ENCODE measurements at regions of chr19 and their contacts with region 1.

Region 1: GRCh38 chr19:12965017-12965811 is 4.2 kb upstream of the DAND5 start:
- DNase-seq: peak; percentile 85
- H3K4me3 Mint-ChIP-seq: peak overlapping the region; percentile 90
- H3K27ac Mint-ChIP-seq: peak overlapping the region; percentile 79
- H3K4me1 Mint-ChIP-seq: peaks cover 8% of the 10 kb centered on the region
- H3K27me3 Mint-ChIP-seq: peaks cover 5% of the 10 kb centered on the region

Region 2: DNA sequence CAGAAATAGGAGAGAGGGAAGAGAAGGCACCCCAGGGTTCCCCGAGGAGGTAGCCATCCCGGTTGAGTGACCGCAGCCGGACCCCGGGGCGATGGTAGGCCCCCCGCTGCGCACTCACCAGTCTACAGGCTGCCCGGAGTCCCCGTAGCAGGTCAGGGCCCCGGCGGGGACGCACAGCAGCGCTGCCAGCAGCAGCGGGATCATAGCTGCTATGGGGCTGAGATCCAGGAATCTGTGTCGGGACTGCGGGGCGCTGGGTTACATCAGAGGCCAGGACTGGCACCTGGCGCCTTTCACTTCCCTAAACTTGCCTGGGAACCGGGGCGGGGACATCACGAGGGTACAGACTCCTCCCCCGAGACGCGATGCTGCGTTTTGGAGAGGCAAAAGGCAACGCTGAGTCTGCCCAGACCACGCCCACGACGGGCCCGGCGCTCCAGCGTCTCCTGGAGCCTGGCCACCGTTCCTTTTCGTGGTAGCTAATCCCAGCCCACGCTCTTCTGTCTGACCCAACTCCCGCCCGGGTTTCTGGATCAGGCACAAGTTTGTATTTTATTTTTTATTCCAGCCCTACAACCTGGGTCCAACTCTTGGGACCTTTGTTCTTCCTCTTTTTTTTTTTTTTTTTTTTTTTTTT is 83.9 kb before region 1 on chr19 and contains the start of gene DNASE2:
- CTCF ChIA-PET with region 1: interaction called, 56 read pairs
- POLR2A ChIA-PET with region 1: interaction called, 10 read pairs
- DNase-seq: peak; percentile 94
- H3K4me3 Mint-ChIP-seq: peak within 1 kb of the TSS; percentile 83
- H3K27ac Mint-ChIP-seq: peak within 1 kb of the TSS; percentile 83
- H3K4me1 Mint-ChIP-seq: peaks cover 40% of the 10 kb centered on the region
- H3K27me3 Mint-ChIP-seq: no peaks in the 10 kb centered on the region
- total RNA-seq, gene DNASE2: 37.6 to 39.3 TPM

Region 3: GRCh38 chr19:12938234-12939025 is 26.8 kb before region 1 on chr19 and contains the start of gene CALR:
- CTCF ChIA-PET with region 1: interaction called, 19 read pairs
- POLR2A ChIA-PET with region 1: interaction called, 13 read pairs
- DNase-seq: peak; percentile 99
- H3K4me3 Mint-ChIP-seq: peak within 1 kb of the TSS; percentile 99
- H3K27ac Mint-ChIP-seq: peak within 1 kb of the TSS; percentile 92
- H3K4me1 Mint-ChIP-seq: peaks cover 61% of the 10 kb centered on the region
- H3K27me3 Mint-ChIP-seq: no peaks in the 10 kb centered on the region
- total RNA-seq, gene CALR: 640 to 660 TPM

Region 4: DNA sequence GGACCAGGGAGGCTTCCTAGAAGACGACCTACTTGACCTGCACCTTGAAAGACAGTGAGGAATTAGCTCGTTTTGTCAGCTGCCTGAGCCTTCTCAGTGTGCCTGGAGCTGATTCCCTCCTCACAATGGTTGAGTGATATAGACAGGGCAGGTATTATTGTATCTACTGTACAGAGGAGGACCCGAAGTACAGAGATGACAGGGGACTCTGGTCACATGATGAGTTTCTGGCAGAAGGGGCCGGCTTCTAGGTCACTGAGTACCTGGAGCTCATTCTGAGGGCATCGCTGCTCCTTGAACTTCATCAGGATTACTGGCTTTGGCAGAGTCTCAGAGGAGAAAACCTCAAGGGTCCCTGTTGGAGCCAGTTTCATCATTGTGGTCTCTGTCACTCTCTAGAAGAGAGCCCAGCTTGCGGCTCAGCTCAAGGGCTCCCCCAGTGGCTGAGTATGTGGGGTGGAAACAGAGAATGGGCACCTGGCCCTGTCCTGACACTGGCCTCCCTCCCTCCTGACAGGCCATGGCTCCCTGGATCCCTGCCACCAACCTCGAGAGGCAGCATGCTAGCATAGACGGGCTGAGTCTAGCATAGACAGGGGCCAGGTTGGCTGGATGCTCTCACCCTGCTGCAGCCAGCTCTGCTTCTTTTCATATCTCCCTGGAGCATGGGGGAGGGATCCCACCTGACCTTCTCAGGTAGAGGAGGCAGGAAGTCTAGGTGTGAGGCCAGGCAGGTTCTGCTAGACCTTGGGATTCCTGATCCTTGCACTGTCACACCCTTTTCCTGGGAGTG is 68.8 kb after region 1 on chr19:
- CTCF ChIA-PET with region 1: interaction called, 12 read pairs
- POLR2A ChIA-PET with region 1: no interaction called
- DNase-seq: peak; percentile 42
- H3K4me3 Mint-ChIP-seq: no peak overlapping the region
- H3K27ac Mint-ChIP-seq: no peak overlapping the region
- H3K4me1 Mint-ChIP-seq: peaks cover 2% of the 10 kb centered on the region
- H3K27me3 Mint-ChIP-seq: peaks cover 4% of the 10 kb centered on the region

Region 5: GRCh38 chr19:13093407-13094105 is 128.3 kb after region 1 on chr19:
- CTCF ChIA-PET with region 1: interaction called, 37 read pairs
- POLR2A ChIA-PET with region 1: interaction called, 3 read pairs
- DNase-seq: peak; percentile 85
- H3K4me3 Mint-ChIP-seq: no peak overlapping the region
- H3K27ac Mint-ChIP-seq: no peak overlapping the region
- H3K4me1 Mint-ChIP-seq: peaks cover 30% of the 10 kb centered on the region
- H3K27me3 Mint-ChIP-seq: peaks cover 31% of the 10 kb centered on the region